ENCODE measurements at regions of chr7 and their contacts with region 1.

Region 1: DNA sequence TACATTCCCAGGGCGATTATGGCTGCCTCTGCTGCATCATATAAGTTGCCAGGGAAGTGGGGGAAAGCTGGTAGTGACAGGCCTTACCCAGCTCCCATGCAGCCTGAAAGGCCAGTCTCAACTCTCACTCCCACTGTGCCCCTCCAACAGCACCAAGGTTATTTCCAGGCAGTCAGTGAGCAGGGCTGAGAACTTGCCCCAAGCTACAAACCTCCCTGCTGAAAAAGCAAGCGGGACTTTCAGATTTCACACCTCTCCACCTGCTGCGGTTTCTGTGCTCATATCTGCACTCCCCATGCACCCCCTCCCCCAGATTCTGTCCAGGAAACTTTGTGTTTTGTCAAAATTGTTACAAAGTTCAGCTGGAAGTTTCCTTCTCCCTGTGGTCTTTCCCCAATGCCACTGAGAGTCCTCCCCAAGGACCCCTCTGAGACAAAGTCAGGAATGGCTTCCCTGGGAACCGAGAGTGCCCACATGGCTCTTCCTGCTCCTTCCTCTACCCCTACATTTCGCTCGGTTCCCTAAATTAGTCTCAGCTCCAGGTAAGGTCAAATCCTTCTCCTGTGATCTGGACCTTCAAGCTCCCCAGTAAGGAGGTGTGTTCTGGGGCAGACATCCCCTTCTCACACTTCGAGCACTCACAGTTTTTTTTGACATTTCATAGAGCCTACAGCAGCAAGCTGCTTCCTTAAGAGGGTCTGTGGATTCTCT is 25.3 kb upstream of the WNT2 start:
- DNase-seq: peak; percentile 84
- ATAC-seq: peak; percentile 97
- H3K4me3 ChIP-seq: no peak overlapping the region
- H3K27ac ChIP-seq: peak overlapping the region; percentile 41
- H3K4me1 ChIP-seq: peaks cover 19% of the 10 kb centered on the region
- H3K27me3 ChIP-seq: no peaks in the 10 kb centered on the region
- CTCF ChIP-seq: no peak
- EP300 ChIP-seq: peak in 1 of 2 experiments; percentile 90; a peak in 3 of 4 replicates
- POLR2A ChIP-seq: no peak
- RAD21 ChIP-seq: no peak

Region 2: GRCh38 chr7:117212969-117213877 is 134.9 kb before region 1 on chr7:
- CTCF ChIA-PET with region 1: interaction called, 8 read pairs
- POLR2A ChIA-PET with region 1: interaction called, 4 read pairs
- RAD21 ChIA-PET with region 1: interaction called, 18 read pairs
- SMC1A ChIA-PET with region 1: interaction called, 20 read pairs
- in situ Hi-C with region 1: no loop called
- intact Hi-C with region 1: no loop called
- DNase-seq: peak; percentile 42
- ATAC-seq: peak; percentile 88
- H3K4me3 ChIP-seq: no peak overlapping the region
- H3K27ac ChIP-seq: no peak overlapping the region
- H3K4me1 ChIP-seq: no peaks in the 10 kb centered on the region
- H3K27me3 ChIP-seq: no peaks in the 10 kb centered on the region
- CTCF ChIP-seq: peak; percentile 88 to 97 (median 92)
- EP300 ChIP-seq: no peak
- POLR2A ChIP-seq: no peak
- RAD21 ChIP-seq: peak; percentile 87

Region 3: GRCh38 chr7:117237646-117238045 is 110.5 kb before region 1 on chr7:
- CTCF ChIA-PET with region 1: interaction called, 3 read pairs
- POLR2A ChIA-PET with region 1: no interaction called
- RAD21 ChIA-PET with region 1: interaction called, 10 read pairs
- SMC1A ChIA-PET with region 1: interaction called, 25 read pairs
- in situ Hi-C with region 1: no loop called
- intact Hi-C with region 1: no loop called
- DNase-seq: peak; percentile 28
- ATAC-seq: peak; percentile 83
- H3K4me3 ChIP-seq: no peak overlapping the region
- H3K27ac ChIP-seq: no peak overlapping the region
- H3K4me1 ChIP-seq: peaks cover 12% of the 10 kb centered on the region
- H3K27me3 ChIP-seq: no peaks in the 10 kb centered on the region
- CTCF ChIP-seq: no peak
- EP300 ChIP-seq: 0 out of 4 replicates have a peak, but pooled peaks of 1 of the 2 experiments have one; percentile 19
- POLR2A ChIP-seq: no peak
- RAD21 ChIP-seq: no peak

Region 4: GRCh38 chr7:117312598-117313580 is 35.2 kb before region 1 on chr7:
- CTCF ChIA-PET with region 1: interaction called, 14 read pairs
- POLR2A ChIA-PET with region 1: interaction called, 3 read pairs
- RAD21 ChIA-PET with region 1: interaction called, 25 read pairs
- SMC1A ChIA-PET with region 1: interaction called, 27 read pairs
- in situ Hi-C with region 1: no loop called
- intact Hi-C with region 1: no loop called
- DNase-seq: no peak
- ATAC-seq: peak; percentile 48; the same call in 2 of the 3 replicates
- H3K4me3 ChIP-seq: no peak overlapping the region
- H3K27ac ChIP-seq: no peak overlapping the region
- H3K4me1 ChIP-seq: no peaks in the 10 kb centered on the region
- H3K27me3 ChIP-seq: no peaks in the 10 kb centered on the region
- CTCF ChIP-seq: peak in 1 of 3 experiments; percentile 47; a peak in 1 of 6 replicates
- EP300 ChIP-seq: no peak
- POLR2A ChIP-seq: no peak
- RAD21 ChIP-seq: peak; percentile 56

Region 5: DNA sequence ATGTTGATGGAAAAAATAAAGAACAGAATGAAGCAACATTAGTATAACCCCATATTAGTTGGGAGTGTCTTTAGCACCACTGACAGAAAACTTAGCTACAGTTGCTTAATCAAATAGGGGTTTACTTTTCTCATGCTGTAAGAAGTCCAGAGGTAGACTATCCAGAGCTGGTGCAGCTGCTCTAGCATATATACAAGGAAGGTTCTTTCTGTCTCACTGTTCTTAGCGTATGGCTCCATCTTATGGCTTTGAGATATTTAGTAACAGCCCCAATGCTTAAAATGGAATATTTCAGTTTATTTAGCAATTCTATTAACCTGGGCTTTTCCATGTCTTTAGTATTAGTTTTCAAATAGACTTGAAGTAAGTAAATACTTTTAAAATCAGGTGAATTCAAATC is 10.1 kb before region 1 on chr7:
- CTCF ChIA-PET with region 1: interaction called, 15 read pairs
- POLR2A ChIA-PET with region 1: interaction called, 3 read pairs
- RAD21 ChIA-PET with region 1: interaction called, 5 read pairs
- SMC1A ChIA-PET with region 1: interaction called, 26 read pairs
- in situ Hi-C with region 1: no loop called
- intact Hi-C with region 1: no loop called
- DNase-seq: no peak
- ATAC-seq: peak; percentile 24; the same call in 1 of the 3 replicates
- H3K4me3 ChIP-seq: no peak overlapping the region
- H3K27ac ChIP-seq: no peak overlapping the region
- H3K4me1 ChIP-seq: no peaks in the 10 kb centered on the region
- H3K27me3 ChIP-seq: no peaks in the 10 kb centered on the region
- CTCF ChIP-seq: peak in 1 of 3 experiments; percentile 19; a peak in 2 of 6 replicates
- EP300 ChIP-seq: no peak
- POLR2A ChIP-seq: no peak
- RAD21 ChIP-seq: peak; percentile 45

Region 6: DNA sequence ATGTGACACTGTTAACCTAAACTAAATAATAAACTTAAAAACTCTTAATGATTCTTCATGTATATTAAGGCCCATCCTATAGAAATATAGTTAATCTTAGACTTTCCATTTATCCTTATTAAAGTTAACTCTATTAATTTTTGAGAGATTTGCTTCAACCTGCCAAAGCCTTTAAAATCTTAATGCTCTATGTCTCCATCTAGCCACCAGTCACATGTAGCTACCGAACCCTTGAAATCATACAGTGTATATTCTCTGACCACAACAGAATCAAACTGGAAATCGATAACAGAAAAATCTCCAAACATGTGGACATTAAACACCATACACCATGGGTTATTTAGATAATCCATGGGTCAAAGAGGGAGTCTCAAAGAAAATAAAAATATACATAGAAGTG is 27.3 kb after region 1 on chr7:
- CTCF ChIA-PET with region 1: interaction called, 10 read pairs
- POLR2A ChIA-PET with region 1: no interaction called
- RAD21 ChIA-PET with region 1: interaction called, 28 read pairs
- SMC1A ChIA-PET with region 1: interaction called, 15 read pairs
- in situ Hi-C with region 1: no loop called
- intact Hi-C with region 1: loop called (anchors 5 kb)
- DNase-seq: no peak
- ATAC-seq: no peak
- H3K4me3 ChIP-seq: no peak overlapping the region
- H3K27ac ChIP-seq: no peak overlapping the region
- H3K4me1 ChIP-seq: no peaks in the 10 kb centered on the region
- H3K27me3 ChIP-seq: no peaks in the 10 kb centered on the region
- CTCF ChIP-seq: peak in 1 of 3 experiments; percentile 22; a peak in 2 of 6 replicates
- EP300 ChIP-seq: no peak
- POLR2A ChIP-seq: no peak
- RAD21 ChIP-seq: 0 out of 2 replicates have a peak, but pooled peaks have one; percentile 22

Region 7: DNA sequence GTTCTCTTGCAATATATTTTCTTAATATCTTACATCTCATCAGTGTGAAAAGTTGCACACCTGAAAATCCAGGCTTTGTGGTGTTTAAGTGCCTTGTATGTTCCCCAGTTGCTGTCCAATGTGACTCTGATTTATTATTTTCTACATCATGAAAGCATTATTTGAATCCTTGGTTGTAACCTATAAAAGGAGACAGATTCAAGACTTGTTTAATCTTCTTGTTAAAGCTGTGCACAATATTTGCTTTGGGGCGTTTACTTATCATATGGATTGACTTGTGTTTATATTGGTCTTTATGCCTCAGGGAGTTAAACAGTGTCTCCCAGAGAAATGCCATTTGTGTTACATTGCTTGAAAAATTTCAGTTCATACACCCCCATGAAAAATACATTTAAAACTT is 161.5 kb after region 1 on chr7:
- CTCF ChIA-PET with region 1: no interaction called
- POLR2A ChIA-PET with region 1: no interaction called
- RAD21 ChIA-PET with region 1: no interaction called
- SMC1A ChIA-PET with region 1: no interaction called
- in situ Hi-C with region 1: no loop called
- intact Hi-C with region 1: no loop called
- DNase-seq: no peak
- ATAC-seq: no peak
- H3K4me3 ChIP-seq: no peak overlapping the region
- H3K27ac ChIP-seq: no peak overlapping the region
- H3K4me1 ChIP-seq: no peaks in the 10 kb centered on the region
- H3K27me3 ChIP-seq: no peaks in the 10 kb centered on the region
- CTCF ChIP-seq: no peak
- EP300 ChIP-seq: no peak
- POLR2A ChIP-seq: no peak
- RAD21 ChIP-seq: no peak

Region 8: GRCh38 chr7:117715784-117716445 is 367.8 kb after region 1 on chr7:
- CTCF ChIA-PET with region 1: no interaction called
- POLR2A ChIA-PET with region 1: no interaction called
- RAD21 ChIA-PET with region 1: no interaction called
- SMC1A ChIA-PET with region 1: no interaction called
- in situ Hi-C with region 1: no loop called
- intact Hi-C with region 1: no loop called
- DNase-seq: no peak
- ATAC-seq: peak; percentile 95
- H3K4me3 ChIP-seq: no peak overlapping the region
- H3K27ac ChIP-seq: no peak overlapping the region
- H3K4me1 ChIP-seq: no peaks in the 10 kb centered on the region
- H3K27me3 ChIP-seq: no peaks in the 10 kb centered on the region
- CTCF ChIP-seq: peak; percentile 59 to 74 (median 68)
- EP300 ChIP-seq: no peak
- POLR2A ChIP-seq: no peak
- RAD21 ChIP-seq: peak; percentile 86